Panc1 (cell line): ENCODE measurements at regions of chr19 and their contacts with region 1.

Region 1: DNA sequence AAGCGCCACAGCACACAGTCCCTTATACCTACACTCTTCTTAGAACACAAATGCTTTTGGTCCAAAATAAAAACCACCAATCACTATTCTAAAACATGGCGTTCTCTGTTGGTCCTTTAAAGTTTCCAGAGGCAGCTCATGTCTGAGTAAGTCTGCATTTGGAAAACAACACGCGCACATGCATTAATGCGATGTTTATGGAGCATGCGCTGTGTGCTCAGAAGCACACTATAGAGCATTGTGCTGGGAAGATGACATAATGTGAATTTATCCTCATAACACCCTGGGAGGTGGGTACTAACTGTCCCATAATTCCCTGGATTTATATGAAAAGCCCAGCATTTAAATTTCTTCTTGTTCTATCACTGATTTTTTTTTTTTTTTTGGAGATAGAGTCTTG is 10.7 kb downstream of the ZNF682 start:
- DNase-seq: no peak
- ATAC-seq: no peak
- H3K4me3 ChIP-seq: no peak overlapping the region
- H3K27ac ChIP-seq: no peak overlapping the region
- H3K4me1 ChIP-seq: no peaks in the 10 kb centered on the region
- H3K27me3 ChIP-seq: no peaks in the 10 kb centered on the region
- CTCF ChIP-seq: no peak

Region 2: GRCh38 chr19:19670070-19670551 is 358.5 kb before region 1 on chr19:
- CTCF ChIA-PET with region 1: no interaction called
- POLR2A ChIA-PET with region 1: interaction called, 11 read pairs
- in situ Hi-C with region 1: no loop called
- intact Hi-C with region 1: no loop called
- DNase-seq: no peak
- ATAC-seq: no peak
- H3K4me3 ChIP-seq: peak overlapping the region; percentile 82 to 86
- H3K27ac ChIP-seq: peak overlapping the region; percentile 84
- H3K4me1 ChIP-seq: no peaks in the 10 kb centered on the region
- H3K27me3 ChIP-seq: no peaks in the 10 kb centered on the region
- CTCF ChIP-seq: no peak